AG04450 (cell line): ENCODE measurements at regions of chr11 and their contacts with region 1.

Region 1: DNA sequence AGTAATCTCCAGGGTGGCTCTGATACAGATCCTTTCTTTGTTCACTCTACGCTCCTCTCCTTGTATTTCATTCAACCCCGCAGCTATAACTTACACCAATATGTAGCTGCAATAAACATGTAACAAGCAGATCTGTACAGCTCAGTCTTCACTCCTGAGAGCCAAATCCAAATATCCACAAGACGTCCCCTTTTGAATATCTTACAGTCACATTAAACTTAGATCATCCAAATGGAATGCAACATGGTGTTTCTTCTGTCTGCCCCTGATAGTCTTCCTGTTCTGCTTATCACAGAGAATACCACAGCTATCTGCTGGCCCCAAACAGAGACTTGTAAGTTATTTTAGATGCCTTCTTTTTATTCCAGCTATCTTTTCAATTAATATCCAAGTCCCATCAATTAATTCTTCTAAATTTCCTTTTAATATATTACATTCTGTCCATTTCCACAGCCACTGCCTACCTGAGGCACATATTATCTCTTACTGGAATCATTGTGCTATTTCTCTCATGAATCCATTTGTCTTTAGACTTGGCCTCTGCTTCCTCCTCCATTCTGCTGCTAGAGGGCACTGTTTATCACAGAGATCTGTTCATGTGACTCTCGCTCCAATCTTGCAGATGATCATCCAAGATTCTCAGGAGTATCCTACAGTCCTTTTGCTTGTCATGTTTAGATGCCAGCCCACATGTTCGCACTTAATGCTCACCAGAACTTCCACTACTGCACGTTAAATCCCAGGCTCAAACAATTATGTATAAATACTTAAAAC is 908.6 kb downstream of the NTM start:
- DNase-seq: peak; percentile 15
- H3K4me3 ChIP-seq: no peak overlapping the region
- H3K27ac ChIP-seq: no peak overlapping the region
- H3K27me3 ChIP-seq: no peaks in the 10 kb centered on the region
- CTCF ChIP-seq: peak; percentile 58

Region 2: DNA sequence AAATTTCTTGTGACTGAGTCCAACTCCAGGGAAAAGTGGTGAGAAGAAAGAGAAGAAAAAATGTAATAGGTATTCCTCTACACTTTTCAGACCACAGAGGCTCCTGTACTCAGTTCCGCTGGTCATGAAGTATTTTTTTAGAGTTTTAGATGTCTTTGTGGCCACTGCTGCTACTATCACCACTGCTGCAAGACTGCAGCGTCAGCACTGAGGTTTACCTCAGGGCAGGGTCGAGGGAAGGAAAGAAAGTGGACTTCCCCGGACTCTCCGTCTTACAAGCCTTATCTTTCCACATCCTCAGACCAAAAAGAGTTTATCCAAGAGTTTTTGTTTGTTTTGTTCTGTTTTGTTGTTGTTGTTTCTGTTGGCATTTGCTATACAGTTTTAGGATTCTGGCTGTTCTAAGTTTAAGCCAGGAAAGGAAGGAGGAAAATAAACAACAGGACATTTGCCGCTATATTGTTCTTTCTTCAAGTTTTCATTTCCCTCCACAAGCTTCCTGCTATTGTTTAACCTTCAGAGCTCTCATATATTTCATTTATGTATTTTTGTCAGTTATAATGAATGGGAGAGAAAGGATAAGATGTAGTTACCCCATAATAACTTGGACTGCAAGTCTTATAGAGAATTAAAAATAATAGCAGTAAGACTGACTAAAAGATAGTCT is 10.7 kb after region 1 on chr11:
- CTCF ChIA-PET with region 1: interaction called, 11 read pairs
- POLR2A ChIA-PET with region 1: no interaction called
- DNase-seq: no peak
- H3K4me3 ChIP-seq: no peak overlapping the region
- H3K27ac ChIP-seq: no peak overlapping the region
- H3K27me3 ChIP-seq: no peaks in the 10 kb centered on the region
- CTCF ChIP-seq: no peak

Region 3: GRCh38 chr11:132300283-132300682 is 21.3 kb after region 1 on chr11:
- CTCF ChIA-PET with region 1: interaction called, 12 read pairs
- POLR2A ChIA-PET with region 1: no interaction called
- DNase-seq: no peak
- H3K4me3 ChIP-seq: no peak overlapping the region
- H3K27ac ChIP-seq: no peak overlapping the region
- H3K27me3 ChIP-seq: no peaks in the 10 kb centered on the region
- CTCF ChIP-seq: peak; percentile 49